Ovary (tissue), 10 donors: ENCODE measurements at regions of chr3 and their contacts with region 1.

Region 1: GRCh38 chr3:128075516-128076482 is 23.6 kb downstream of the SEC61A1 start:
- DNase-seq: peak; percentile 81 to 95 (median 92)
- H3K4me3 ChIP-seq: peak overlapping the region; percentile 32
- H3K27ac ChIP-seq: no peak overlapping the region
- H3K4me1 ChIP-seq: peaks cover 6% of the 10 kb centered on the region
- H3K27me3 ChIP-seq: no peaks in the 10 kb centered on the region
- CTCF ChIP-seq: peak; percentile 90 to 99 (median 95)
- EP300 ChIP-seq: no peak
- POLR2A ChIP-seq: no peak

Region 2: GRCh38 chr3:128051837-128052594 is 23.8 kb before region 1 on chr3 and contains the start of gene SEC61A1:
- intact Hi-C with region 1: loop called in 1 of 4 experiments (anchors 1 kb)
- DNase-seq: peak; percentile 92 to 97 (median 95)
- H3K4me3 ChIP-seq: peak within 1 kb of the TSS; percentile 98
- H3K27ac ChIP-seq: peak within 1 kb of the TSS in 1 of 2 donors; percentile 83
- H3K4me1 ChIP-seq: peaks cover 11% of the 10 kb centered on the region
- H3K27me3 ChIP-seq: no peaks in the 10 kb centered on the region
- CTCF ChIP-seq: no peak
- EP300 ChIP-seq: no peak
- POLR2A ChIP-seq: peak; percentile 42
- total RNA-seq, gene SEC61A1: 52.3 to 165 (median 121) TPM